ENCODE measurements at regions of chr6 and their contacts with region 1.

Region 1: DNA sequence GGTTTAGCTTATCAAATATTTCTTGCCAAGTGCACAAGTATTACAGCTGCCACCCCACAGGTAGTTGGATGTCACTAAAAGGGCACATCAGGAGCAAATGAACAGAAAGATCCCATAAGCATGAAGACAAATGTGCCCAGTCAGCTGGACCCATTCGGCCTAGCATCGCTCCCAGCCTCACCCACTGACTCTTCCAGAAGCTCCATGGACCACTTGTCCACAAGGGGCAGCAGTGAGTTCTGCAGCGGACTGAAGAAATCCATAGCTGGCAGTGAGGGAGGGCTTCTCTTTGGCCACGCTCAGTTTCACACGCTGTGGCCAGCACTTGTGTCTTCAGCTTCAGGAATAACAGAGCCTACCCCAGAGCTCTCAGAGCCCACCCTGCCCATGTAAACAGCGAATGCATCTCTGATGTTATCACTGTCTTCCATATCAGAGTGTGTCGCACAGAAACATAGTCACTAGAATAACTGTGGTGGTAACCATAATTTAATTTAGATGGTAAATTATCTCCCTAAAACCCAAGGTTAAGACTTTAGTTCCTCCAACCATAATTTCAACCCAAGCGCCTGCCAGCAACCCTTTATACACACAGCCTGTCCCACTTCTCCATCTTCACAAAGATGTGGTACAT is 15.8 kb downstream of the CGA start:
- DNase-seq: peak; percentile 88
- ATAC-seq: peak; percentile 99
- H3K4me3 Mint-ChIP-seq: no peak overlapping the region
- H3K27ac Mint-ChIP-seq: no peak overlapping the region
- H3K4me1 Mint-ChIP-seq: no peaks in the 10 kb centered on the region
- H3K27me3 Mint-ChIP-seq: no peaks in the 10 kb centered on the region; the same call in 1 of the 2 replicates
- CTCF ChIP-seq: peak; percentile 85

Region 2: DNA sequence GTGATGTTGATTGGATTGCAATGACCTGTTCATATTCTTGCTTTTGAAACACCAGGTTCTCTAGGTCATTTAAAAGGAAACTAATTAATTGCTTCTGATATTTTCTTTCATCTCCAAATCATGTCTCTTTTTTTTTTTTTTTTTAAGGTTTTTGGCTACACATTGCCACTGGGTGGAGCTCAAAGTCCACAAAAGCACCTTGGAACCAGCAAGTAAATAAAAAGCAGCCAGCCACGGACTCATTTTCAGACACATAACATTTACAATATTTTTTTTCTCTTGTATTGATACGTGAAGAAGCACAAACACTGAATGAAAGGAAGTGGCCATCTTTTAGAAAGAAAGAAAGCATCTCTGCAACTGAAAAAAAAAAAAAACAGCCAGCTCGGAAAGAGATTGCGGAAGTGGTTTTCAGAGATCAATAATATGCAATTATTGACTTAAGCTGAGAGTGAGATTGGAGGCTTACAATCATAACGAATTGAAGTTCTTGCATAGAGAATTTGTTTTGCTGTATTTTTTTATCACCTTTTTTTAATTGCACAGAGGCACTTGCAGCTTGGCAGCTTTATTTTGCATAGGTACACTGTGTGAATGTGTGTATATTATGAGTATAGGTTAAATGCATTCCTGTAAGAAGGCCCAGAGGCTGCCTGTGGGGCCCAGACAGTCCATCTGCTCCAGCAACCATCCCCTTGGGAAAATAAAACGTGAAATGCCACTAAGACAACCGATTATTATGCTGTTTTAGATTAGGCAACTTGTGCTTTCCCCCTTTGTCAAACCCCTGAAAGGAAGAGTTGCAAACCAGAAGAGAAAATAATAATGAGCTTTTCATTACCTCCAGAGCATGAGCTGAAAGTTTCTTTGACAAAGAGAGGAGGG is 12.4 kb before region 1 on chr6:
- CTCF ChIA-PET with region 1: interaction called, 60 read pairs
- POLR2A ChIA-PET with region 1: no interaction called
- DNase-seq: peak; percentile 14
- ATAC-seq: no peak; the same call in 1 of the 2 replicates
- H3K4me3 Mint-ChIP-seq: peak overlapping the region; percentile 17; the same call in 1 of the 2 replicates
- H3K27ac Mint-ChIP-seq: no peak overlapping the region
- H3K4me1 Mint-ChIP-seq: peaks cover 12% of the 10 kb centered on the region
- H3K27me3 Mint-ChIP-seq: no peaks in the 10 kb centered on the region; the same call in 1 of the 2 replicates
- CTCF ChIP-seq: peak; percentile 48; the same call in 1 of the 2 replicates

Region 3: GRCh38 chr6:87093651-87094050 is 14.6 kb after region 1 on chr6:
- CTCF ChIA-PET with region 1: interaction called, 33 read pairs
- POLR2A ChIA-PET with region 1: no interaction called
- DNase-seq: no peak
- ATAC-seq: no peak
- H3K4me3 Mint-ChIP-seq: no peak overlapping the region
- H3K27ac Mint-ChIP-seq: no peak overlapping the region
- H3K4me1 Mint-ChIP-seq: 0 out of 2 replicates have a peak, but pooled peaks cover 5% of the 10 kb centered on the region
- H3K27me3 Mint-ChIP-seq: no peaks in the 10 kb centered on the region
- CTCF ChIP-seq: no peak

Region 4: GRCh38 chr6:87099472-87099871 is 20.4 kb after region 1 on chr6:
- CTCF ChIA-PET with region 1: interaction called, 18 read pairs
- POLR2A ChIA-PET with region 1: no interaction called
- DNase-seq: no peak
- ATAC-seq: no peak
- H3K4me3 Mint-ChIP-seq: no peak overlapping the region
- H3K27ac Mint-ChIP-seq: no peak overlapping the region
- H3K4me1 Mint-ChIP-seq: 0 out of 2 replicates have a peak, but pooled peaks cover 5% of the 10 kb centered on the region
- H3K27me3 Mint-ChIP-seq: no peaks in the 10 kb centered on the region
- CTCF ChIP-seq: no peak

Region 5: GRCh38 chr6:87122457-87122856 is 43.4 kb after region 1 on chr6:
- CTCF ChIA-PET with region 1: interaction called, 13 read pairs
- POLR2A ChIA-PET with region 1: no interaction called
- DNase-seq: peak; percentile 58
- ATAC-seq: peak; percentile 90
- H3K4me3 Mint-ChIP-seq: peak overlapping the region; percentile 42
- H3K27ac Mint-ChIP-seq: no peak overlapping the region
- H3K4me1 Mint-ChIP-seq: no peaks in the 10 kb centered on the region
- H3K27me3 Mint-ChIP-seq: peaks cover 13% of the 10 kb centered on the region
- CTCF ChIP-seq: no peak

Region 6: DNA sequence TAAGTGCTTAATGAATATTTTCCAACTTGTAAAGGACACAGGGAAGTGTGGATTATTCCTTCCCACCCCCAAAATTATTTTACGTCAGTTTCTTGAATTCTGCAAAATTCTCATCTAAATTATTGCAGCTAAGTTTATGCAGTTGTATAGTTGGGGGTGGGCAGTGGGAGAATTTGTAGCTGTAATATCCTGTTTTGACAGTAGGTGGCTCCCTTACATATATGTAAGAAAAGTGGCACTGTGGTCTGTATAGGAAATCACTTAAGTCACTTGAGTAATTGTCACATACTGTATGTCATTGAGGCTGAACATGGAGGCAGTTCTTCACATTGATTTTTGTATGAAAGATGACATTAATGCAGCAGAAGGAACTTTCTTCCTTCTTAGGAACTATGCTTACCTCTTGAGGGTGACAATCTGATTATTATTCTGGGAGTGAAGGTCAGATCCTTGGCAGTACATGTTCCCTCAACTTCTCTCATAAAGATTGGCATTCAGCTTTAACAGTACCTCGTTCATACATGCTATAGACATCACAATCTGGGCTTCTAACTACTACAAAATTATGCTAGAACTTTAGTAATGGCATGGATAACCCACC is 314.0 kb after region 1 on chr6:
- CTCF ChIA-PET with region 1: interaction called, 14 read pairs
- POLR2A ChIA-PET with region 1: no interaction called
- DNase-seq: no peak
- ATAC-seq: peak; percentile 80
- H3K4me3 Mint-ChIP-seq: no peak overlapping the region
- H3K27ac Mint-ChIP-seq: no peak overlapping the region
- H3K4me1 Mint-ChIP-seq: peaks cover 4% of the 10 kb centered on the region; the same call in 1 of the 2 replicates
- H3K27me3 Mint-ChIP-seq: no peaks in the 10 kb centered on the region
- CTCF ChIP-seq: peak; percentile 61

Measured in WTC11 (cell line).